ENCODE measurements at regions of chr2 and their contacts with region 1.

Region 1: DNA sequence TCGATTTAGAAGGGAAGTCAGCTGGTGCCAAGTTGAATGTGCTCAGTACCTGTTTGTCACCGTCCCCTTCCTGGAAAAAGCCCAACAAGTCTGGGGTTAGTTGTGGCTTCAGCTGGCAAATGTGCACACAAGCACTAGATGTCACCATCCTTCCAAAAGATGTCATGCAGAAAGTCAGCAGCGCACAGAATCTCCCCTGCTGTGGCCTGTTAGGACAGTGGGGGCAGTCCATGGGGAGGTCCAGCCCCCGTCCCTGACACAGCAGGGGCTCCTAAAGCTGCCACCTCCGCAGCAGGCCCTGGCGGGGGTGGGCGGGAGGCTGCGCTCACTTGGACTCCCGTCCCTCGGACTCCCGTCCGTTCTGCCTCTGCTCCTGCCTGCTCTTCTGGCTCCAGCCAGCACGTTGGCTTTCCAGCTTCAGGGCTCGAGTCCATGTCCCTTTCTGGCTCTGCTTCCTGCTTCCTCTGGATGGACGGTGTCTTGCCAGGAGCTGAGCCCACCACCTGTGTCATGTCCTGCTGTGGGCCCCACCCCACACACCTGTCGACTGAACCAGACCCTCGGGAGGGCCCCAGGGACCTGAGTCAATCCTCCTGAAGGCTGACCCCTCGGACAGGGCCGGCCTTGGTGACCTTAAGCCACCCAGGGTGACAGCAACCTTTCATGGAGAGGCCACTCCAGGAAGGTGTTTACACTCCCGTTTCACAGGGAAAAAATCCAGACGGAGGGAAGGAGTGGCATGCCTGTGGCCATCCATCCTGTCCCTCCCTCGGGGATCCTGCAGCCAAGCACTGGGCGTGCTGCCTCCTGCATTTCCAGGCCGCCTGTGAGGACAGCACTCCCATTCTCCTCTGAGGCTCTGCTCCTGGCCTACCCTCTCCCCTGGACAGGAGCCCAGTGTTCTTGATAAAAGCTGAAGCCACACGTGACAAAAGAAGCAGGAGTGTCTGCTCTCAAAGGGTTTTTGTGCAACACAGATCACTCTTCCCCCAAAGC is 8.5 kb downstream of the RAB17 start:
- DNase-seq: peak; percentile 48 to 90 (median 74)
- H3K4me3 ChIP-seq: no peak overlapping the region
- H3K27ac ChIP-seq: peak overlapping the region in 2 of 5 donors; percentile 74 to 75
- H3K4me1 ChIP-seq: peaks cover 4 to 9% of the 10 kb centered on the region in 2 donors
- H3K27me3 ChIP-seq: no peaks in the 10 kb centered on the region
- CTCF ChIP-seq: peak; percentile 20 to 61 (median 52)
- POLR2A ChIP-seq: no peak

Region 2: GRCh38 chr2:237529452-237530402 is 52.3 kb before region 1 on chr2:
- intact Hi-C with region 1: no loop called
- DNase-seq: peak in 1 of 7 donors; percentile 26
- H3K4me3 ChIP-seq: no peak overlapping the region
- H3K27ac ChIP-seq: peak overlapping the region in 1 of 5 donors; percentile 43
- H3K4me1 ChIP-seq: no peaks in the 10 kb centered on the region
- H3K27me3 ChIP-seq: no peaks in the 10 kb centered on the region
- CTCF ChIP-seq: no peak
- POLR2A ChIP-seq: no peak

Region 3: DNA sequence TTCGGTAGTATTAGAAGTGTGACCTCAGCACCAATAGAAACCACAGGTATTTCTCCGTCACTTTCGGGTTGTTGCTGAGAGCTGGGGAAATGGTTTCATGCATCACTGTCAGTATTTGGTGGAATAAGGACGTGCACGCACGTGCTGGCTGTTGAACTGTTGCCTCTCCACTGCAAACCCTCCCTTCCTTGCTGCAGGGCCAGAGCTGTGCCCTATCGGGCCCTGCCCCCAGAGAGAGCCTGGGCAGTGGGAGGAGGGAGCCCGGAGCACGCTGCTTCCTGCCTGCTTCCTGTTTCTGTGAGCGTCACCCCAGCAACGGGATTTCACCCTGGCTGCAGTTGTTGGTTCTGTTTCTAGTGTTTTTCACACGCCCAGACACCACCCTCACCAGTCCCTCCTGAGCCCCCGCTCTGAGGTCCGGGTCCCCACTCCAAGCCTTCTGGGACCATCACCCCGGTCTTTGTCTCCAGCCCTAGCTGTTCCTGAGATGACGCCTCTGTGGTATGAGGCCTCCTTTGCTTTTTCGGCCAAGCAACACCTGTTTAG is 92.8 kb after region 1 on chr2:
- intact Hi-C with region 1: loop called in 1 of 2 experiments (anchors 5 kb)
- DNase-seq: peak; percentile 70 to 91 (median 73)
- H3K4me3 ChIP-seq: peak overlapping the region in 1 of 4 donors; percentile 20
- H3K27ac ChIP-seq: peak overlapping the region in 3 of 5 donors; percentile 7 to 75 (median 42)
- H3K4me1 ChIP-seq: peaks cover 9 to 54% of the 10 kb centered on the region in 2 donors
- H3K27me3 ChIP-seq: no peaks in the 10 kb centered on the region
- CTCF ChIP-seq: peak in 4 of 6 experiments; percentile 16 to 26 (median 19)
- POLR2A ChIP-seq: no peak